ENCODE measurements at regions of chr22 and their contacts with region 1.

Region 1: GRCh38 chr22:36856121-36856791 is 4.5 kb upstream of the NCF4 start:
- DNase-seq: peak; percentile 86 to 99 (median 94)
- ATAC-seq: peak; percentile 78
- H3K4me3 ChIP-seq: no peak overlapping the region
- H3K4me3 Mint-ChIP-seq: peak overlapping the region; percentile 13
- H3K27ac ChIP-seq: no peak overlapping the region
- H3K27ac Mint-ChIP-seq: no peak overlapping the region
- H3K4me1 ChIP-seq: peaks cover 16% of the 10 kb centered on the region
- H3K4me1 Mint-ChIP-seq: peaks cover 13% of the 10 kb centered on the region
- H3K27me3 ChIP-seq: no peaks in the 10 kb centered on the region
- H3K27me3 Mint-ChIP-seq: no peaks in the 10 kb centered on the region
- CTCF ChIP-seq: peak; percentile 100

Region 2: GRCh38 chr22:36546092-36546804 is 310.0 kb before region 1 on chr22:
- CTCF ChIA-PET with region 1: no interaction called
- POLR2A ChIA-PET with region 1: no interaction called
- intact Hi-C with region 1: loop called in 1 of 2 experiments (anchors 1 kb)
- DNase-seq: peak in 5 of 9 experiments; percentile 10 to 53 (median 26)
- ATAC-seq: peak; percentile 48
- H3K4me3 ChIP-seq: no peak overlapping the region
- H3K4me3 Mint-ChIP-seq: no peak overlapping the region
- H3K27ac ChIP-seq: no peak overlapping the region
- H3K27ac Mint-ChIP-seq: no peak overlapping the region
- H3K4me1 ChIP-seq: peaks cover 5% of the 10 kb centered on the region
- H3K4me1 Mint-ChIP-seq: peaks cover 7% of the 10 kb centered on the region
- H3K27me3 ChIP-seq: no peaks in the 10 kb centered on the region
- H3K27me3 Mint-ChIP-seq: peaks cover 32% of the 10 kb centered on the region
- CTCF ChIP-seq: peak; percentile 28

Region 3: GRCh38 chr22:36569999-36570398 is 286.3 kb before region 1 on chr22:
- CTCF ChIA-PET with region 1: no interaction called
- POLR2A ChIA-PET with region 1: no interaction called
- intact Hi-C with region 1: no loop called
- DNase-seq: no peak
- ATAC-seq: no peak
- H3K4me3 ChIP-seq: no peak overlapping the region
- H3K4me3 Mint-ChIP-seq: no peak overlapping the region
- H3K27ac ChIP-seq: no peak overlapping the region
- H3K27ac Mint-ChIP-seq: no peak overlapping the region
- H3K4me1 ChIP-seq: no peaks in the 10 kb centered on the region
- H3K4me1 Mint-ChIP-seq: no peaks in the 10 kb centered on the region
- H3K27me3 ChIP-seq: no peaks in the 10 kb centered on the region
- H3K27me3 Mint-ChIP-seq: peaks cover 26% of the 10 kb centered on the region
- CTCF ChIP-seq: no peak

Region 4: DNA sequence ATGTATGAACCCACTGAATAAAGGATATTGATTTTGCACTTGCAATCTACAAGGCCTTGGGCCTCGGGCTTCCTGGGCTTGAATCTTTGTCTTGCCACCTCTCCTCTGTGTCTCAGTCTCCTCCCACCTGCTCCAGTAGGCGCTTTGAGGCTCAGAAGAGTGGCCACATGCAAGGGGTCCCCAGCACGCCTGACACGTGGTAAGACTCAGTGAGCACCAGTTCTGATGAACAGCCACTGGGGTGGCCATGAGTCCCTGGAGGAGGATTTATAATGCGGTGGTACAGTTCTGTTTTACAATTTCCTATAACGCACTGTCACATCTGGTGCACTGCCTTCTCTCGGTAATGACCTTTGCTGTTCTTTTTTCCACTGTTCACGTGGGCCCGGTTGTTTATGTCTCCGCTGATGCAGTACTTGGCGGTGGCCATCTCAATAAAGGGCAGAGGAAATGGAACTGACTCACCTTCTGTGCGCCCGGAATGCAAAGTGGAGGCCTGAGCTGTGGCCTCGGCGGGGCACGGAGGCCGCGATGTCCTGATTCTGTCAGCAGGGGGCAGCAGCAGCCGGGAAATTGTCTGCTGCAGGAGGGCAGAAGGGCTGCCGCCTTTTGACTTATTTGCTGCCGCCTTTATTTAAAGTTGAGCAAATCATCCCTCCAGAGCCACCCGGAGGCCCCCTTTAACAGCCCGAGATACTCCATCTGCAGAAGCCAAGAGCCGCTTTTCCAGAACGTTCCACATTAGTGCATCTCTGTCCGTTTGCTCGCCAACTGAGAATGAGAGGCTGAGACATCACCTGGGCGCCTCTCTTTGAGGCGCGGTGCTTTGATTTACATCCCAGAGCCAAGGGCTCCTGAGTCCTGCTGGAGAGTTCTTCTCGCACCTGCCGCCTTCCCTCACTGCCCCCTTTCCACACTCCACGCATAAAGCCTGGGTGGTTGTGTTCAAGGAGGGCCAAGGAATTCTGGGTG is 74.3 kb before region 1 on chr22:
- CTCF ChIA-PET with region 1: interaction called, 62 read pairs
- POLR2A ChIA-PET with region 1: no interaction called
- intact Hi-C with region 1: loop called (anchors 1 kb)
- DNase-seq: peak; percentile 71 to 93 (median 85)
- ATAC-seq: peak; percentile 96
- H3K4me3 ChIP-seq: no peak overlapping the region
- H3K4me3 Mint-ChIP-seq: no peak overlapping the region
- H3K27ac ChIP-seq: no peak overlapping the region
- H3K27ac Mint-ChIP-seq: peak overlapping the region; percentile 41
- H3K4me1 ChIP-seq: peaks cover 11% of the 10 kb centered on the region
- H3K4me1 Mint-ChIP-seq: peaks cover 16% of the 10 kb centered on the region
- H3K27me3 ChIP-seq: peaks cover 0 to 2% of the 10 kb centered on the region in 2 experiments
- H3K27me3 Mint-ChIP-seq: peaks cover 2% of the 10 kb centered on the region
- CTCF ChIP-seq: peak; percentile 95

Region 5: DNA sequence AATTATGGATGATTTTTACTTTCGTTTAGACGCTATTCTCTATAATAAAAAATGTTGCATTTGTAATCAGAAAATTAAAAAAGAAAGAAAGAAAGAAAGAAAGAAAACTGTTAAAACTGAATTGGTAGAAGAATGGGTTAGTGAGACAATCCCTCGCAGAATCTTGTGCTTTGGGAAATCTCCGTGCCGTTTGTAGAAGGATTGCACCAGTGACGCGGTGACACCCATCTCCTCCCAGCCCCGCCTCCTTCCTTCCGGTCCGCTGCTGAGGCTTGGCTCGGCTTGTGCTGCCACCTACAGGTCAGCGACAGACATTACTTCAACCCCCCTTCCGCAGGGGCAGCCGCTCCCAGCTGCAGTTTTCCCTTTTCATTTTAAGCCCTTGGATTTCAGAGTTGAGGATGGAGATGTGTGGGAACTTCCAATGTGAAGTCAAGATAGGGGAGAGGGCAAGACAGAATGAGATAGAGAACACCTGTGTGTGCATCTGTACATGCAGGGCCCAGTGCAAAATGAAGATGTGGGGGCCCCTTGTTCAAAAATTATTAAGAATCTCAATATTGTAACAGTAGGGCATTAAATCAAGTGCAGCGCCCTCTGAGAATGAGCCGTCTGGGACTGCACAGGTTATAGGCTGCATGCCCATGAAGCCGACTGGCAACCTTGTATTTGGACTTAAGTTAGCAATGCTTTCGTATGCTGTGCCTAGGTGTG is 121.8 kb after region 1 on chr22:
- CTCF ChIA-PET with region 1: interaction called, 15 read pairs
- POLR2A ChIA-PET with region 1: no interaction called
- intact Hi-C with region 1: loop called (anchors 1 kb)
- DNase-seq: peak; percentile 78 to 95 (median 91)
- ATAC-seq: peak; percentile 90
- H3K4me3 ChIP-seq: peak overlapping the region; percentile 50 to 70
- H3K4me3 Mint-ChIP-seq: peak overlapping the region; percentile 97
- H3K27ac ChIP-seq: peak overlapping the region; percentile 64 to 70
- H3K27ac Mint-ChIP-seq: peak overlapping the region; percentile 95
- H3K4me1 ChIP-seq: peaks cover 4% of the 10 kb centered on the region
- H3K4me1 Mint-ChIP-seq: peaks cover 6% of the 10 kb centered on the region
- H3K27me3 ChIP-seq: no peaks in the 10 kb centered on the region
- H3K27me3 Mint-ChIP-seq: no peaks in the 10 kb centered on the region
- CTCF ChIP-seq: peak; percentile 69